Natural killer cell (primary cell): ENCODE measurements at regions of chr1 and their contacts with region 1.

Region 1: GRCh38 chr1:44594871-44595746 is 79.2 kb downstream of the TMEM53 start:
- DNase-seq: peak; percentile 78 to 86
- ATAC-seq: peak; percentile 88 to 99 (median 98)
- H3K4me3 ChIP-seq: no peak overlapping the region
- H3K4me3 Mint-ChIP-seq: no peak overlapping the region
- H3K27ac ChIP-seq: no peak overlapping the region
- H3K27ac Mint-ChIP-seq: peak overlapping the region in 1 of 2 donors; percentile 54
- H3K4me1 ChIP-seq: peaks cover 3% of the 10 kb centered on the region
- H3K4me1 Mint-ChIP-seq: peaks cover 0 to 8% of the 10 kb centered on the region in 2 donors
- H3K27me3 ChIP-seq: no peaks in the 10 kb centered on the region
- H3K27me3 Mint-ChIP-seq: peaks cover 0 to 3% of the 10 kb centered on the region in 2 donors
- CTCF ChIP-seq: peak; percentile 97

Region 2: DNA sequence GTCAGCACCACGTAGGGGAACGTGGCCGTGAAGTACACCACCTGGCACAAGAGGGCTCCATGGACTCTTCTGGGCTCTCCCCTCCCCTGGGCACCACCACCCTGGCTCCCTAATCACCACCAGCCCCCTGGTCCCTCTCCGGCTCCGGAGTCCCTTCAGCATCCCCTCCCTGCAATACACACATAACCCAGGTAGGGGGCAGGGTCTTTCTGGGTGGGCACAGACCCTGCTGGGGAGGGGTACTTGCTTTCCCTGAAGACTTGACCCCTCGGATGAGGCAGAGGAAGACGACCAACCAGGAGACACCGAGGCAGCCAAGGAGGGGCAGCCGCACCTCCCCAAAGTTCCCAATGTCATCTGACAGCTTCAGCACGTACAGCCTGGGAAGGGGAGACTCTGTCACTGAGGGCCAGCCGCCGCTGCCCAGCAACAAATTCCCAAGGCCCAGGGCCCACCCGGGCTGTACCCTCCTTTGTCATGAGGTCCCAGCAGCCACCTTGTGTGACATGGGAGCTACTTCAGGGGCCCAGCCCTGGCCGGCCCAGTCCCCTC is 592.4 kb before region 1 on chr1:
- intact Hi-C with region 1: loop called (anchors 10 kb)
- DNase-seq: no peak
- ATAC-seq: no peak
- H3K4me3 ChIP-seq: no peak overlapping the region
- H3K4me3 Mint-ChIP-seq: no peak overlapping the region
- H3K27ac ChIP-seq: no peak overlapping the region
- H3K27ac Mint-ChIP-seq: no peak overlapping the region
- H3K4me1 ChIP-seq: no peaks in the 10 kb centered on the region
- H3K4me1 Mint-ChIP-seq: no peaks in the 10 kb centered on the region
- H3K27me3 ChIP-seq: no peaks in the 10 kb centered on the region
- H3K27me3 Mint-ChIP-seq: no peaks in the 10 kb centered on the region
- CTCF ChIP-seq: no peak

Region 3: GRCh38 chr1:44377925-44378784 is 217.0 kb before region 1 on chr1:
- intact Hi-C with region 1: loop called (anchors 1 kb)
- DNase-seq: peak; percentile 38 to 74
- ATAC-seq: peak; percentile 59 to 74 (median 62)
- H3K4me3 ChIP-seq: no peak overlapping the region
- H3K4me3 Mint-ChIP-seq: no peak overlapping the region
- H3K27ac ChIP-seq: no peak overlapping the region
- H3K27ac Mint-ChIP-seq: no peak overlapping the region
- H3K4me1 ChIP-seq: no peaks in the 10 kb centered on the region
- H3K4me1 Mint-ChIP-seq: no peaks in the 10 kb centered on the region
- H3K27me3 ChIP-seq: no peaks in the 10 kb centered on the region
- H3K27me3 Mint-ChIP-seq: peaks cover 0 to 6% of the 10 kb centered on the region in 2 donors
- CTCF ChIP-seq: peak; percentile 65